ENCODE measurements at regions of chr3 and their contacts with region 1.

Region 1: GRCh38 chr3:186259612-186260383 is 102.2 kb downstream of the DGKG start:
- DNase-seq: peak; percentile 15 to 34 (median 18)
- H3K4me3 ChIP-seq: no peak overlapping the region
- H3K4me3 Mint-ChIP-seq: no peak overlapping the region
- H3K27ac ChIP-seq: no peak overlapping the region
- H3K27ac Mint-ChIP-seq: peak overlapping the region in 4 of 7 donors; percentile 31 to 65 (median 52)
- H3K4me1 ChIP-seq: peaks cover 8 to 9% of the 10 kb centered on the region in 2 donors
- H3K4me1 Mint-ChIP-seq: peaks cover 20% of the 10 kb centered on the region
- H3K27me3 ChIP-seq: no peaks in the 10 kb centered on the region
- H3K27me3 Mint-ChIP-seq: no peaks in the 10 kb centered on the region
- CTCF ChIP-seq: peak; percentile 74

Region 2: DNA sequence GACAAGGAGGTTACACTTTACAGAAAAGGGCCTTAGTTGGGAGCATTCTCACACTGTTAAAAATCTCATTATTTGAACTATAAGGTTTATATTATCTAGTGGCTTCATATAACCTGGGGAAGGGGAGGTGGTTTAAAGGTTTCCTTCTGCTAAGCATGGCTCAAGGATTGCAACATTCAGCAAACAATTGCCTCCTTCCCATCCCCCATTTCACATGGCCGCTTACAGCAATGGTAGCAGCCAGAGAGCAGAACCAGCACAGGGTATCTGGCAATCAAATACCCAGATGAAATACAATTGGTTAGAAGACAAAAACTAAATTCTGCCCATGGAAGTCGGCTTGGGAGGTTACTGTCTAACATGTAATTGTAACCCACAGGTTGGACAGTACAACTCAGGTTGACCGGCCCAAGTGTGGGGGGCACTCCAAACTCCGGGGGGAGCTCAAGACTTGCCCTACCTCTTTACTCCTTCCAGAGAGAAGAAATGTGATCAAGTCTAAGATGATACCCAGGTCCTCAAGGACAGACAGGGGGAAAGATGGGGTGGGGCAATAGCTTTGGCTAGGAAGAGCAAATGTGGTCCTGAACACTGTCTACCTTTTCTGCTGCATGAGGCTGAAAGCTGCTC is 166.4 kb before region 1 on chr3:
- intact Hi-C with region 1: no loop called
- DNase-seq: no peak
- H3K4me3 ChIP-seq: no peak overlapping the region
- H3K4me3 Mint-ChIP-seq: no peak overlapping the region
- H3K27ac ChIP-seq: no peak overlapping the region
- H3K27ac Mint-ChIP-seq: peak overlapping the region in 2 of 7 donors; percentile 30 to 48
- H3K4me1 ChIP-seq: peaks cover 54 to 55% of the 10 kb centered on the region in 2 donors
- H3K4me1 Mint-ChIP-seq: peaks cover 53% of the 10 kb centered on the region
- H3K27me3 ChIP-seq: peaks cover 3 to 13% of the 10 kb centered on the region in 2 donors
- H3K27me3 Mint-ChIP-seq: peaks cover 18 to 23% (median 22%) of the 10 kb centered on the region in 3 donors
- CTCF ChIP-seq: no peak

Region 3: DNA sequence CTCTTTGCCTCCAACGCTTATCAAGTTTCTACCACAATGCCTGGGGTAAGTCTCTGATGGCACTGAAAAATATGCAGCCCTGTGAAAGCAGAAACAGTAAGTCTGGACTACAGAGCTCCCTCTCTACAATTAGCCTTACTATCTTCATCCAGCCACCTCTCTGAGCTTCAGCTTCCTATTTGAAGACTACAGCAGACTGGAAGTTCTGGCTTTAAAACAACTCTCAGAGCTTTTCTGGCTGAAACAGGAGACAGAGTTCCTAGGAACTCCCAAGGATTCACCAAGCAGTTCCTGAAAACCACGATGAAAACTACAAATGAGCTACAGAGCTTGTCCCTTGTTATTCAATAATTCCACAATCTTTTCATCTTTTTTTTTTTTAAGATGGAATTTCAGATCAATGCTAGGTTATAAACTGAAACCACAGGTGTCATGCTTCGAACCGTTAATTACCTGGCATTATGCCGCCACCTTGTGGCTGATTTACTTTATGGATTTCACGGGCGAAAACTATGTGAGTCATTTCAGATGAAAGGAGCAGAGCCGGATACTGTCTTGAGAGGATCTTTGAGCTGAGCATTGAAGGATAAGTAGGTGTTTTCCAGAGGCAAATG is 280.5 kb after region 1 on chr3:
- intact Hi-C with region 1: loop called (anchors 5 kb)
- DNase-seq: peak; percentile 56 to 71 (median 70)
- H3K4me3 ChIP-seq: peak overlapping the region in 2 of 3 experiments; percentile 12 to 39
- H3K4me3 Mint-ChIP-seq: peak overlapping the region in 1 of 2 donors; percentile 67
- H3K27ac ChIP-seq: no peak overlapping the region
- H3K27ac Mint-ChIP-seq: no peak overlapping the region
- H3K4me1 ChIP-seq: peaks cover 3 to 5% of the 10 kb centered on the region in 2 donors
- H3K4me1 Mint-ChIP-seq: peaks cover 8% of the 10 kb centered on the region
- H3K27me3 ChIP-seq: no peaks in the 10 kb centered on the region
- H3K27me3 Mint-ChIP-seq: no peaks in the 10 kb centered on the region
- CTCF ChIP-seq: peak; percentile 83

Measured in CD14-positive monocyte (primary cell).